ENCODE measurements at regions of chr6 and their contacts with region 1.

Region 1: GRCh38 chr6:154783229-154783628 is 50.0 kb downstream of the SCAF8 start:
- DNase-seq: no peak
- ATAC-seq: no peak

Region 2: DNA sequence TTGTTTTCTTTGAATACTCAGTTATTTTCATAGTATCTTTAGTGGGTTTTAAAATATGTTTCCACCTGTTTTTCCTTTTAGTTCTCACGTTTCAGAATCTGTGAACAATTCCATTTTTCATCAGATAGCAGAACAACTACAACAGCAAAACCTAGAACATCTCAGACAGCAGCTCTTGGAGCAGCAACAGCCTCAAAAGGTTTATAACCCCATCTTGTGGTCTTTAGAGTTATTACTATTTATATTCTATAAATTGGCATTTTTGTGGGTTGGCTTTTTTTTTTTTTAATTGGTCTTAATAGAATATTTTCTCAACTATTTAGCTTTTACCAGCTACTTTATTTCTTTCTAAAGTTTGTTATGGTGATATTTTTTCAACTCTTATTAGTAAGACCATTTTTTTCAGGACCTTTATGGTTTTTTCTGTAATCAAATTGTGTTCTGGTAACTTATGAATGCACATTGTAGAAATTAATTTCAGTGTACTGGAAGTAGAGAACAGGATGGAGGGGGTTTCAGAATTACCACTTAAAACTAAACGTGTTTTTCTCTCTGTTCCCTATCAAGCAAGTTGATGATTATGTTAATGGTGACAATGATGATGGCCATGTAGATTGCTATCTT is 22.2 kb after region 1 on chr6:
- intact Hi-C with region 1: loop called (anchors 1 kb)
- DNase-seq: no peak
- ATAC-seq: no peak

Measured in sciatic nerve (tissue), 2 donors.